ENCODE measurements at regions of chr3 and their contacts with region 1.

Region 1: DNA sequence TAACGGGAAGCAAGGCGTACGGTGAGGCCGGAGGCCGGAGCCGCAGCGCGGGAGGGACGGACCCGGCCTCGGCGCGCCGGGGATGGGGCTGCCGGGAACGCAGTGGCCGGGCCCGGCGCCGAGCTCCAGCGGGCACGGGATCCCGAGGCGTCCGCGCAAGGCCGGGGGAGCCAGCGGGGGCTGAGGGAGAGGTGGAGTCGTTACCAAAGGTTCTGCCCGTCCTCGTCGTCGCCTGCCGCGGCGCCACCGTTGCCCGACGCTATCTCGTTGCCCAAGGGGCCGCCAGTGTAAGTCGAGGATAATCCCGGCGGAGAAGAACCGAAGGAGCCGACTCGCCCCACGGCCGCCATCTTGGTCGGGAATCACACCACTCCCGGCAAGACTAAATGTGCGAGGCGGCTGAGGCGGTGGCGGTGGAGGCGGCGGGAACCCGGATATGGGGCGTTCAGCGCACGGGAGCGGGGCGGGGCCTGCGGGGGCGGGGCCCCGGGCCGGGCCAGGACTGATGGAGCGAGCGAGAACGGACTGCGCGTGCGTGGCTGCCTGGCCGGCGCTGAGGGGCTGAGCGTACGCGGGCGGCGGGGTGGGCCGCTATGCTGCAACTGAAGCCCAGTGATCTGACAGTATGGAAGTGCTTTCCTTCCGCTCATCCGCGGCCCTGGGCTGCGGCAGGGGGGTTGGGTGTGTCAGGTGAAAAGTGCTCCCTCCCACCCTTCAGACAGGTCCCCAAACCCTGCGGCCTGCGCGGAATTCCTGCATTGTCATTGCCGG is at the start of gene DYNC1LI1:
- DNase-seq: peak; percentile 81 to 90 (median 88)
- H3K4me3 ChIP-seq: peak within 1 kb of the TSS; percentile 81 to 92 (median 84)
- H3K4me3 Mint-ChIP-seq: peak within 1 kb of the TSS; percentile 92 to 93
- H3K27ac ChIP-seq: peak within 1 kb of the TSS; percentile 91 to 92
- H3K27ac Mint-ChIP-seq: peak within 1 kb of the TSS; percentile 87 to 96 (median 94)
- H3K4me1 ChIP-seq: peaks cover 58 to 62% of the 10 kb centered on the region in 2 donors
- H3K4me1 Mint-ChIP-seq: peaks cover 41% of the 10 kb centered on the region
- H3K27me3 ChIP-seq: no peaks in the 10 kb centered on the region
- H3K27me3 Mint-ChIP-seq: no peaks in the 10 kb centered on the region
- CTCF ChIP-seq: no peak
- polyA plus RNA-seq, gene DYNC1LI1: 23.5 to 50.1 (median 46.8) TPM

Region 2: DNA sequence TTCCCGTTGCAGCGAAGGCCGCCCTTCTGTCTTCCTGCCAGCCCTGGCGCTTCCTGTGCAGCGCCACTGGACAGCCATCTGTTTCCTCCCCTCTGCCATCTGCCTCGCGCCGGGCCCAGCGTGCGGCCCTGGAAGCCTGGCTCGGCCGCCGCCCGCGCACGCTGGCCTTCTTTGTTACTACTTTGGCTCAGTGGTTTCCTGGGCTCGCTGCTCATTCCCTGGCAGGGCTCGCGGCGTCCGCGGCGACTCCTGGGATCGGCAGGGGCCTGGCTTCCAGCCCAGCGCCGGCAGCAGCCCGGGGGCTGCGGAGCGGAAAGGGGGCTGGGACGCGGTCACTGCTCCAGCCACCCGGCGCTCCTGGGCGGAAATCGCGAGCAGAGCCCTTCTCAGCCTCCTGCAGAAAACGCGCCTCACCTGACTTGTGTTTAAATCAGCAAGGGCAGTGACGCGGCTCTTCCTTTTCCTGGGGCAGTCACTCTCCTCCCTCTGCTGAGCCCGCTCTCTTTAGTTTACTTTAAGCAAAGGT is 169.0 kb before region 1 on chr3:
- intact Hi-C with region 1: loop called in 1 of 2 experiments (anchors 10 kb)
- DNase-seq: peak in 2 of 3 donors; percentile 46 to 50
- H3K4me3 ChIP-seq: peak overlapping the region; percentile 44 to 81 (median 52)
- H3K4me3 Mint-ChIP-seq: peak overlapping the region; percentile 80 to 97
- H3K27ac ChIP-seq: peak overlapping the region; percentile 86 to 90
- H3K27ac Mint-ChIP-seq: peak overlapping the region; percentile 92 to 98 (median 97)
- H3K4me1 ChIP-seq: peaks cover 97 to 100% of the 10 kb centered on the region in 2 donors
- H3K4me1 Mint-ChIP-seq: peaks cover 90% of the 10 kb centered on the region
- H3K27me3 ChIP-seq: no peaks in the 10 kb centered on the region
- H3K27me3 Mint-ChIP-seq: no peaks in the 10 kb centered on the region
- CTCF ChIP-seq: no peak

Region 3: GRCh38 chr3:32684800-32685542 is 114.4 kb after region 1 on chr3 and contains the start of gene CNOT10:
- intact Hi-C with region 1: loop called in 1 of 2 experiments (anchors 10 kb)
- DNase-seq: peak; percentile 97 to 98 (median 98)
- H3K4me3 ChIP-seq: peak within 1 kb of the TSS; percentile 79 to 93 (median 88)
- H3K4me3 Mint-ChIP-seq: peak within 1 kb of the TSS; percentile 88 to 94
- H3K27ac ChIP-seq: peak within 1 kb of the TSS; percentile 79 to 92
- H3K27ac Mint-ChIP-seq: peak within 1 kb of the TSS; percentile 92 to 97 (median 96)
- H3K4me1 ChIP-seq: peaks cover 21 to 25% of the 10 kb centered on the region in 2 donors
- H3K4me1 Mint-ChIP-seq: peaks cover 26% of the 10 kb centered on the region
- H3K27me3 ChIP-seq: no peaks in the 10 kb centered on the region
- H3K27me3 Mint-ChIP-seq: no peaks in the 10 kb centered on the region
- CTCF ChIP-seq: peak; percentile 6
- polyA plus RNA-seq, gene CNOT10: 17.9 to 21.5 (median 19.6) TPM

Measured in CD14-positive monocyte (primary cell).